ENCODE measurements at regions of chr11 and their contacts with region 1.

Region 1: GRCh38 chr11:102451681-102452460 is 694 bp downstream of the TMEM123 start:
- DNase-seq: peak; percentile 64 to 82 (median 77)
- ATAC-seq: peak; percentile 74
- H3K4me3 ChIP-seq: peak overlapping the region; percentile 71
- H3K4me3 Mint-ChIP-seq: peak overlapping the region; percentile 88 to 99 (median 96)
- H3K27ac ChIP-seq: peak overlapping the region; percentile 80
- H3K27ac Mint-ChIP-seq: peak overlapping the region; percentile 93 to 98 (median 94)
- H3K4me1 ChIP-seq: peaks cover 48 to 52% of the 10 kb centered on the region in 2 donors
- H3K4me1 Mint-ChIP-seq: peaks cover 57 to 81% (median 71%) of the 10 kb centered on the region in 7 donors
- H3K27me3 ChIP-seq: no peaks in the 10 kb centered on the region
- H3K27me3 Mint-ChIP-seq: no peaks in the 10 kb centered on the region

Region 2: GRCh38 chr11:101914738-101915426 is 537.0 kb before region 1 on chr11 and contains the start of gene CEP126:
- CTCF ChIA-PET with region 1: no interaction called
- POLR2A ChIA-PET with region 1: no interaction called
- intact Hi-C with region 1: loop called in 1 of 2 experiments (anchors 2 kb)
- DNase-seq: peak; percentile 89 to 96 (median 92)
- ATAC-seq: peak; percentile 93
- H3K4me3 ChIP-seq: peak within 1 kb of the TSS; percentile 78
- H3K4me3 Mint-ChIP-seq: peak within 1 kb of the TSS; percentile 90 to 97 (median 94)
- H3K27ac ChIP-seq: peak within 1 kb of the TSS; percentile 68
- H3K27ac Mint-ChIP-seq: peak within 1 kb of the TSS; percentile 79 to 95 (median 89)
- H3K4me1 ChIP-seq: peaks cover 10 to 13% of the 10 kb centered on the region in 2 donors
- H3K4me1 Mint-ChIP-seq: peaks cover 18 to 30% (median 26%) of the 10 kb centered on the region in 7 donors
- H3K27me3 ChIP-seq: no peaks in the 10 kb centered on the region
- H3K27me3 Mint-ChIP-seq: peaks cover 0 to 6% (median 0%) of the 10 kb centered on the region in 5 donors
- total RNA-seq, gene CEP126: 0.39 to 3.4 (median 2.6) TPM

Region 3: GRCh38 chr11:102346748-102347461 is 105.0 kb before region 1 on chr11 and contains the start of gene BIRC2:
- CTCF ChIA-PET with region 1: interaction called, 5 read pairs
- POLR2A ChIA-PET with region 1: interaction called, 9 read pairs
- intact Hi-C with region 1: loop called (anchors 1 kb)
- DNase-seq: peak; percentile 93 to 98 (median 95)
- ATAC-seq: peak; percentile 91
- H3K4me3 ChIP-seq: peak within 1 kb of the TSS; percentile 96
- H3K4me3 Mint-ChIP-seq: peak within 1 kb of the TSS; percentile 81 to 98 (median 96)
- H3K27ac ChIP-seq: peak within 1 kb of the TSS; percentile 99
- H3K27ac Mint-ChIP-seq: peak within 1 kb of the TSS; percentile 97 to 100 (median 99)
- H3K4me1 ChIP-seq: peaks cover 17% of the 10 kb centered on the region in 2 donors
- H3K4me1 Mint-ChIP-seq: peaks cover 29 to 48% (median 44%) of the 10 kb centered on the region in 7 donors
- H3K27me3 ChIP-seq: no peaks in the 10 kb centered on the region
- H3K27me3 Mint-ChIP-seq: no peaks in the 10 kb centered on the region
- total RNA-seq, gene BIRC2: 37.5 to 103 (median 72.0) TPM

Region 4: DNA sequence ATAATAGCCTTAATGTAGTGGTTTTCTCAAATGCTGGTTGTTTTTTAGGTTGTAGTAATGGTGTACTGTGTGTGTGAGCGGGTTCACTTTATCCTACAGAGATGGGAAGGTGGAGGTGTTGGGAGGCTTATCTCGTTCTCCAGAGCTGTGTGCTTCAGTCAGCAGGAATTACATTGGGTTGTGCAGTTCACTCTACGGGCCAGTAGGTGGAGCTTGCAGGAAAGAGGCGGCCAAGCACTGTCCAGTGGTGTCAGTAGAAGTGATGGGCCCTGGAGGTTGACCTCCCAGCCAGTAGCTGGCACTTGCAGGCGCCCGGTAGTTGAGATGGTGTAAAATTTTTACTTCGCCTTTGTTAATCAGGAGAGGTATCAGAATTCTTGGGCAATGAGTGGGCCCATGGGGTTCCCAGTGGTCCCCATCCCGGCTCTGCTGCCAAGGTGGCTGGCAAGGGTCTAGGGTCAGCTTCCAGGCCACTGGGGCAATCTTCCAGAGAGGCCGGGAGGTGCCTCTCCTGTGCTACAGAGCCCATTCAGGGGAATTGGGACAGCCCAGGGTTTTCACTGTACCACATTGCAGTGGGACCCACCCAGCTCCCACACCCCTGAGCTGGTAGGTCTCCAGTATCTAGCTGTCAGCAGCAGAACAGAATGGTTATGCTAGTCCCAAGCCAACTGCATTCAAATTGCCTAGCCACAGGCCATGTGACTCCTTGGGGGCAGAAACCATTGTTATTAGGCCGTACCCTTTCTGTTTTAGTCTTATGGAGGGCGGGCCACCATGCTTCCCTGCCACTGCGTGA is 61.0 kb before region 1 on chr11:
- CTCF ChIA-PET with region 1: interaction called, 18 read pairs
- POLR2A ChIA-PET with region 1: interaction called, 33 read pairs
- intact Hi-C with region 1: loop called (anchors 1 kb)
- DNase-seq: peak in 8 of 9 donors; percentile 20 to 55 (median 40)
- ATAC-seq: peak; percentile 92
- H3K4me3 ChIP-seq: no peak overlapping the region
- H3K4me3 Mint-ChIP-seq: peak overlapping the region in 1 of 10 donors; percentile 12
- H3K27ac ChIP-seq: no peak overlapping the region
- H3K27ac Mint-ChIP-seq: peak overlapping the region in 8 of 9 donors; percentile 59 to 91 (median 77)
- H3K4me1 ChIP-seq: peaks cover 0 to 16% of the 10 kb centered on the region in 2 donors
- H3K4me1 Mint-ChIP-seq: peaks cover 10 to 54% (median 48%) of the 10 kb centered on the region in 7 donors
- H3K27me3 ChIP-seq: no peaks in the 10 kb centered on the region
- H3K27me3 Mint-ChIP-seq: no peaks in the 10 kb centered on the region

Region 5: GRCh38 chr11:102420547-102420946 is 31.3 kb before region 1 on chr11:
- CTCF ChIA-PET with region 1: interaction called, 8 read pairs
- POLR2A ChIA-PET with region 1: interaction called, 13 read pairs
- intact Hi-C with region 1: loop called (anchors 1 to 2 kb)
- DNase-seq: no peak
- ATAC-seq: no peak
- H3K4me3 ChIP-seq: no peak overlapping the region
- H3K4me3 Mint-ChIP-seq: peak overlapping the region in 6 of 10 donors; percentile 6 to 65 (median 35)
- H3K27ac ChIP-seq: peak overlapping the region; percentile 12
- H3K27ac Mint-ChIP-seq: peak overlapping the region in 8 of 9 donors; percentile 48 to 97 (median 88)
- H3K4me1 ChIP-seq: peaks cover 13 to 71% of the 10 kb centered on the region in 2 donors
- H3K4me1 Mint-ChIP-seq: peaks cover 65 to 100% (median 95%) of the 10 kb centered on the region in 7 donors
- H3K27me3 ChIP-seq: no peaks in the 10 kb centered on the region
- H3K27me3 Mint-ChIP-seq: no peaks in the 10 kb centered on the region

Region 6: DNA sequence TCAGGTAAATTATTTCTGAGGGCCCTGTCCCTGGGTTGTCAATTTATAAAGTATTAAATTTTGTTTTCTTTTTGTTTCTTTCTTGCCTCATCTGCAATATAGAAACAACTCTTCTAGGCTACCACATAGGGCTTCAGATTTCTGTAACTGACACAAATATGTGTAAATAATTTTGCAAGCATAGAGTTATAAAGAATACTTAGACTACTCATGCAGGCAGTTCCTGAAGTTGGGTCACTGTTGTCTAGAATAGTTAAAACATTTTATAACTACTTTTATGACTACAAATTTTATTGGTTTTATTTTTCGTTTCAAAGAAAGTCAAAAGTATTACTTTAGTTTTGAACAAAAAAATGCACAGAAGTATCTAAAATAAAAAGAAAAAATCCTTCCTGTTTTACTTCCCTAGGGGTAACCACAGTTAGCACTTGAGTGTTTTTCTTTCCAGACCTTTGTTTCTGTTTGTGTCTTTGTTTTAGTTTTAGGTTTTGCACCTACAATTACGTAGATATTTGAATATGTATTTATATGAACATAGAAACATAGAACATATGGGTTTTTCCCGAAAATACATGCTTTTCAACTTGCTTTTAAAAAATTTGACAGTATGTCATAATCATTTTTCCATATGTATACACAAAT is 13.1 kb after region 1 on chr11:
- CTCF ChIA-PET with region 1: interaction called, 5 read pairs
- POLR2A ChIA-PET with region 1: interaction called, 23 read pairs
- intact Hi-C with region 1: loop called (anchors 1 kb)
- DNase-seq: no peak
- ATAC-seq: peak; percentile 36
- H3K4me3 ChIP-seq: no peak overlapping the region
- H3K4me3 Mint-ChIP-seq: peak overlapping the region in 8 of 10 donors; percentile 14 to 76 (median 56)
- H3K27ac ChIP-seq: no peak overlapping the region
- H3K27ac Mint-ChIP-seq: peak overlapping the region in 8 of 9 donors; percentile 5 to 80 (median 54)
- H3K4me1 ChIP-seq: peaks cover 21 to 59% of the 10 kb centered on the region in 2 donors
- H3K4me1 Mint-ChIP-seq: peaks cover 48 to 86% (median 76%) of the 10 kb centered on the region in 7 donors
- H3K27me3 ChIP-seq: no peaks in the 10 kb centered on the region
- H3K27me3 Mint-ChIP-seq: no peaks in the 10 kb centered on the region

Region 7: DNA sequence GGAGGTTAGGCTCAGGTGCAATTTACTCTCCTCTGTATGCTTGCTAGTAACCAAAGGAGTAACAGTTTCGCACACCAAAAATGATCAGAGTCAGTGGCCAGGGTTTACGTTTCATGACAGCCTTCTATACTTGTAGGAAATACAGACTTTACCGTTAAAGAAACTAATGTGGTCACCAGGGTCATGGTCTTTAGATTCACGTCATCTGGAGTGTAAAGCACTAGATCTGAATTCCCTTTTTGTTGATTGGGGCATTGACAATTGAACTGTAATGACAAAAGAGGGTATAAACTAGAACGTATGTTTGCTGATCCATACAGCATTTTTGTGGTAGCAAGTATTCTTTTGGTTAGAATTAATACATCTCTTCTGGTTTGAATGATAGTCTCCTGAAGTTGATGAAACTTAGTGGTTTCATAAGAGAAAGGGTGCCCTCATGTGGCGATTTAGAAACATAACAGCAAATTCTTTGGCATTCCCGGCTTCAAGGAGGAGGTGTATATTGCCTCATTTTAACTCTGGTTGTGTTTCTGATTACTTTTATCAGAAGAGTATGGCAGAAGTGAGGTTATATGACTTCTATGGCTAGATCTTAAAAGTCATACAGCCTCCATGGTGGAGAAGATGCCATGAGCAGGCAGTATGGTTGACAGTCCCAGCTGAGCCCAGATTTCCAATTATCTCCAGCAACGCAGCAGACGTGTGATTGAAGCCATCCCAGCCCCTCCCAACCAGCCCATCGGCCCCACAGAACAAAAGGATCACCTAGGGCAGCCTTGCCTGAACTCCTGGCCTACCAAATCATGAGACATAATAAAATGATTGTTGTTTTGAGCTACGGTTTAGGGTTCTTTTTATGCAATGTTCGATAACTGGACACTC is 43.5 kb after region 1 on chr11:
- CTCF ChIA-PET with region 1: interaction called, 4 read pairs
- POLR2A ChIA-PET with region 1: interaction called, 3 read pairs
- intact Hi-C with region 1: loop called (anchors 1 kb)
- DNase-seq: peak in 7 of 9 donors; percentile 54 to 79 (median 71)
- ATAC-seq: peak; percentile 91
- H3K4me3 ChIP-seq: no peak overlapping the region
- H3K4me3 Mint-ChIP-seq: peak overlapping the region in 1 of 10 donors; percentile 18
- H3K27ac ChIP-seq: no peak overlapping the region
- H3K27ac Mint-ChIP-seq: peak overlapping the region in 4 of 9 donors; percentile 2 to 40 (median 12)
- H3K4me1 ChIP-seq: no peaks in the 10 kb centered on the region
- H3K4me1 Mint-ChIP-seq: peaks cover 4 to 26% (median 10%) of the 10 kb centered on the region in 7 donors
- H3K27me3 ChIP-seq: no peaks in the 10 kb centered on the region
- H3K27me3 Mint-ChIP-seq: peaks cover 0 to 22% (median 0%) of the 10 kb centered on the region in 5 donors

Region 8: DNA sequence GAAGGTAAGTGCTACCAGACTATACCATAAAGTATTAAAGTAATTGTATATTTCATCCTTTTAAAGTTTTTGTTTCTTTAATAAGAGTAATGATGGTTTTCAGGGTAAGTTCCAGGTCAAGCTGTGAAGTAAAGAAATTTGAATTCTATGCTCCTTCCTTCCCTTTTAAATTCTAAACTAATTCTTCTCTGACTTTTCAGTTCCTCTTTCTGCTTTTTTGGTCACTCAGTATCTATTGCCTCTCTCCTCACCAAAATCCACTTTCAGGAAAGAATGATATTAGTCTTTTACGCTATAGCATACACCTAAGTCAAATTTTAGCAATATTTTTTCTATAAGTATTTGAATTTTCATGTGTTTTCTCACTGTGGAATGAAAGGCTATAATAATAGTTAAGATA is 264.7 kb after region 1 on chr11:
- CTCF ChIA-PET with region 1: no interaction called
- POLR2A ChIA-PET with region 1: no interaction called
- intact Hi-C with region 1: no loop called
- DNase-seq: no peak
- ATAC-seq: no peak
- H3K4me3 ChIP-seq: no peak overlapping the region
- H3K4me3 Mint-ChIP-seq: no peak overlapping the region
- H3K27ac ChIP-seq: no peak overlapping the region
- H3K27ac Mint-ChIP-seq: no peak overlapping the region
- H3K4me1 ChIP-seq: no peaks in the 10 kb centered on the region
- H3K4me1 Mint-ChIP-seq: peaks cover 0 to 3% (median 0%) of the 10 kb centered on the region in 7 donors
- H3K27me3 ChIP-seq: no peaks in the 10 kb centered on the region
- H3K27me3 Mint-ChIP-seq: peaks cover 16 to 38% (median 26%) of the 10 kb centered on the region in 5 donors

Region 9: DNA sequence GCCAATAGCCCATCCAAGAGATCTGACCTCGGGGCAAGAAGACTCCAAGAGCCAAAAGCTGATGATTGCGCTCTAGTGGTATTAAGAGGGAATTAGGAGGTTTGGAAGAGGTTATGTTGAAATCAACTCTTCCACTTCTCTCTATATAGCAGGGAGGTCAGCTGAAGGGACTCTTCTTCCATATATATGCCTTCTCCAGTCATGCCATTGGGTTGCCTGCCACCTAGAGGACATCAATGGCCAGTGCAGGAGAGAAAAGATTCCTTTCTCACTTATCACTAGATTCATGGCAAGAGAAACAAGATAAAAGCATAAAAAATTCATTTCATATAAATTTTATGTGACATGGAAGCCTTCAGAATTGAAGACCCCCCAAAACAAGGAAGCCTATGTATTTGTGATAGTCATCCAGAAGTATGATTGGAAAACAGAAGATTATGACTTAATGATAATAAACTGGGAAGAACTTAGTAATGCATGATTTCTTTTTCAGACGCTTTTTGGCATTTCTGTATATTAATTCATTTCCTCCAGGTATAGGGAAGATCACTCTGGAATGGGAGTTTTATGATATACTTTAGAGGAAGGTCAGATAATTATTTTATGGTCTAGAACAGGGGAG is 1149.5 kb after region 1 on chr11:
- CTCF ChIA-PET with region 1: no interaction called
- POLR2A ChIA-PET with region 1: no interaction called
- intact Hi-C with region 1: no loop called
- DNase-seq: peak in 2 of 9 donors; percentile 1 to 3
- ATAC-seq: peak; percentile 70
- H3K4me3 ChIP-seq: no peak overlapping the region
- H3K4me3 Mint-ChIP-seq: no peak overlapping the region
- H3K27ac ChIP-seq: no peak overlapping the region
- H3K27ac Mint-ChIP-seq: no peak overlapping the region
- H3K4me1 ChIP-seq: no peaks in the 10 kb centered on the region
- H3K4me1 Mint-ChIP-seq: no peaks in the 10 kb centered on the region
- H3K27me3 ChIP-seq: no peaks in the 10 kb centered on the region
- H3K27me3 Mint-ChIP-seq: peaks cover 5 to 10% (median 8%) of the 10 kb centered on the region in 5 donors

Measured in naive thymus-derived CD4-positive, alpha-beta T cell (primary cell).